Aorta (tissue), 5 donors: ENCODE measurements at regions of chr15 and their contacts with region 1.

Region 1: DNA sequence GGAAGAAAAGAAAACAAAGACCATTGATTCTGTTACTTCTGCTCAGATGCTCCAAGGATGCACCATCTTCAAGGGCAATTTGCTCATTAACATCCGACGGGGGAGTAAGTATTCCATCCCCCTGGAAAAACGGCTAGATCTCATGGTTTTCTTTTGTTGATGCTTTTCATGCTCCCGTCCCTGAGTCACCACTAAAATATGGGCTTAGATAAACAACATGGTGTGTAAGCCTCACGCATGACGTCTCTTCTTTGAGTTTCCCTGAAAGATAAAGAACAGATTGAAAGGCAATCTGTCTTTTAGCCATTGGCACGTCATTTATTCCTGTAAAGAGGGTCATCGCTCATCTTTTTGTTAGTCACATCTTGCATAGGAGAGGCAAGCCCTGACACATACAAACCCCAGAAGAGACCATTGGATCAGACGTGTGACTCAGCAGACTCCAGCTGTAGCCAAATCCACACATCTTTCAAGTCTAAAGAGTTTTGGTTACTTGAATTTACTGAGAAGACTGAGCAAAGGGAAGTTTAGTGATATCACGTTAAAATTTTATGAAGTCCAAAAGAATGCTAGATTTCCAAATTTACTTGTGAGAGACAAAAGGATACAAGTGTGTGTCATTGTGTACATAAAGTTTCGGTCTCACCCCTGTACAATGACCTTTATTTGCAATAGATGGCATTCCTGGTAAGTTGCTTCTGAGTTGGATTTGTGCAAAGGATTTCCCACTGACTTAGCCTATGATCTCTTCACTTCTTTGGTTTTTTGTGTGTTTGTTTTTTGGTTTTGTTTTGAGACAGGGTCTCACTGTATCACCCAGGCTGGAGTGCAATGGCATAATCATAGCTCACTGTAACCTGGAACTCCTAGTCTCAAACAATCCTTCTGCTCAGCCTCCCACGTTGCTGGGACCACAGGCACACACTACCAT is 110.5 kb downstream of the PGPEP1L start:
- DNase-seq: no peak
- ATAC-seq: peak; percentile 73
- H3K4me3 ChIP-seq: no peak overlapping the region
- H3K27ac ChIP-seq: peak overlapping the region; percentile 52 to 83
- H3K4me1 ChIP-seq: peaks cover 2 to 7% of the 10 kb centered on the region in 2 donors
- H3K27me3 ChIP-seq: no peaks in the 10 kb centered on the region

Region 2: GRCh38 chr15:98853161-98853560 is 43.9 kb before region 1 on chr15:
- intact Hi-C with region 1: loop called in 1 of 2 experiments (anchors 2 kb)
- DNase-seq: peak; percentile 93 to 95
- ATAC-seq: peak; percentile 93
- H3K4me3 ChIP-seq: peak overlapping the region; percentile 46 to 73
- H3K27ac ChIP-seq: peak overlapping the region in 1 of 2 donors; percentile 89
- H3K4me1 ChIP-seq: no peaks in the 10 kb centered on the region
- H3K27me3 ChIP-seq: no peaks in the 10 kb centered on the region

Region 3: DNA sequence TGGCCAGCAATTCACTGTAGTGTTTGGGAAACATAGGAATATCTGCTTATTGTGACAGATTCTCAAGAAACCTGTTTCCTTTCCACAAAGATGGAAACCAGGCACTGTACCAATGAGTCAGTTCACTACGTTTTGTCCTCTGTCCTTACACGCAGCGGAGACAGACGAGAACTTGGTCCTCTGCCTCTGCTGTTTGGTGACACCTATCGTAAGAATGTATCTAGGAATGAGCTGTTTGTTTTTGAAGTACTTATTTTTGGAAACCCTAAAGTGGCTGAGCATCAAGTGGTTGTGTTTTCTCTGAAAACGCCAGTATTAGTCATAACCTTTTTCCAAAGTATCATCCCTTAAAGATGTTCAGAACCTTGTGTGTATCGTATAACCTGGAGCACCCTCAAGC is 17.6 kb after region 1 on chr15:
- intact Hi-C with region 1: loop called in 1 of 2 experiments (anchors 2 kb)
- DNase-seq: no peak
- ATAC-seq: peak; percentile 62
- H3K4me3 ChIP-seq: no peak overlapping the region
- H3K27ac ChIP-seq: peak overlapping the region in 1 of 2 donors; percentile 91
- H3K4me1 ChIP-seq: peaks cover 4 to 5% of the 10 kb centered on the region in 2 donors
- H3K27me3 ChIP-seq: no peaks in the 10 kb centered on the region